WTC11 (cell line): ENCODE measurements at regions of chr11 and their contacts with region 1.

Region 1: GRCh38 chr11:79493555-79494171 is 52.8 kb upstream of the TENM4 start:
- DNase-seq: peak; percentile 96
- ATAC-seq: peak; percentile 97
- H3K4me3 Mint-ChIP-seq: no peak overlapping the region
- H3K27ac Mint-ChIP-seq: no peak overlapping the region
- H3K4me1 Mint-ChIP-seq: peaks cover 12% of the 10 kb centered on the region
- H3K27me3 Mint-ChIP-seq: peaks cover 6% of the 10 kb centered on the region; the same call in 1 of the 2 replicates
- CTCF ChIP-seq: peak; percentile 96

Region 2: DNA sequence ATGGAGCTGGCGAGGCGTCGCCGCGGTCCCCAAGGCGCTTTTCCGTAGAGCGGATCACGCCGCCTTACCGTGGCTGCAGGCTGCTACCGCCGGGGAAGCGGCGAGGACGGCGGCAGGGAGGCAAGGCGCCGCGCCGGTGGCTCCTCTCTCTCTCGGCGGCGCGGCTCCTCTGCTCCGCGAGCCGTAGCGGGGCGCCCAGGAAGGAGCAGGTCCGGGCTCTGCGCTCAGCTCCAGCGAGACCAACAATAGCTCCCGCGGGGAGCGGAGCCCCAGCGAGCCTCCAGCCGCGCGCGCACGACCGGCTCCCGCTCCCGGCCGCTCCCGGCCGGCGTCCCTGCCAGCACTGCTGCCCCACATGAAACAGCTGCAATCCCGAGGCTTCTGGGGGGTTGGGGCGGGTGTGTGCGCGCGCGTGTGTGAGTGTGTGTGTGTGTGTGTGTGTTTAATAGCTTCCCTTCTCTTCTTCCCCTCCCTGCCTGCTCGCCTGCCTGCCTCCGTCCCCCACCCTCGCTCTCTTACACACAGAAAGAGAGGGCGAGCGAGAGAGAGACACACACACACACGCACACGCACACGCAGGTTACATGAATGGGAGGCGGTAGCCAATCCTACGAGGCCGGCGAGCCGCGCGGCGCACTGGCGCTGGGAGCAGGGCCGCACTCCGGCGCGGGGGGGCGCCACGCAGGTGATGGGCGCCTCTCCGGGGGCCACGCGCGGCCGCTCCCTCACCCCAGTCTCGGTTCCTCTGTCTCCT is 53.0 kb before region 1 on chr11 and contains the start of gene TENM4:
- CTCF ChIA-PET with region 1: interaction called, 22 read pairs
- POLR2A ChIA-PET with region 1: no interaction called
- DNase-seq: peak; percentile 61
- ATAC-seq: peak; percentile 8
- H3K4me3 Mint-ChIP-seq: peak within 1 kb of the TSS; percentile 86
- H3K27ac Mint-ChIP-seq: no peak within 1 kb of the TSS
- H3K4me1 Mint-ChIP-seq: peaks cover 36% of the 10 kb centered on the region
- H3K27me3 Mint-ChIP-seq: peaks cover 68% of the 10 kb centered on the region
- CTCF ChIP-seq: peak; percentile 10; the same call in 1 of the 2 replicates
- total RNA-seq, gene TENM4: 17.2 to 25.0 TPM (median 18.1 TPM) in 3 replicates

Region 3: DNA sequence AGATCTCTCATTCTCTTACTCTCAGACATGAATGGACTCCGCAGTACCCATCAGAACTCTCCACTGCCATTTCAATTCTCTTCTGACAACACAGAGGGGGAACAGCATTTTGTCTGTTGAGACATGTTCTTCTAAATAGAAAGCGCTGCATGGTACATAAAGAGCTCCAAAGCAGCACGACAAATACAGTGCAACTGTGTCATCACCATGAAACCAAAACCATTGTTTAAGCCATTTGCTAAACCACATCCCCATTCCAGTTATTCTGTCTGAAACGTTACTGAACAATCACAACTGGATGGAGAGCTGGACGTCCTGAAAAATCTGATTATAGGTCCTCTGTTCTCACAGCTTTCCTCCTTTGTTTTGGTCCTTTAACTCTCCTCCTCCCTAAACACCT is 35.0 kb before region 1 on chr11:
- CTCF ChIA-PET with region 1: interaction called, 21 read pairs
- POLR2A ChIA-PET with region 1: no interaction called
- DNase-seq: no peak
- ATAC-seq: no peak
- H3K4me3 Mint-ChIP-seq: no peak overlapping the region
- H3K27ac Mint-ChIP-seq: no peak overlapping the region
- H3K4me1 Mint-ChIP-seq: peaks cover 25% of the 10 kb centered on the region
- H3K27me3 Mint-ChIP-seq: no peaks in the 10 kb centered on the region
- CTCF ChIP-seq: no peak

Region 4: GRCh38 chr11:79472736-79473529 is 20.7 kb before region 1 on chr11:
- CTCF ChIA-PET with region 1: interaction called, 18 read pairs
- POLR2A ChIA-PET with region 1: no interaction called
- DNase-seq: peak; percentile 70
- ATAC-seq: peak; percentile 87
- H3K4me3 Mint-ChIP-seq: peak overlapping the region; percentile 47
- H3K27ac Mint-ChIP-seq: peak overlapping the region; percentile 94
- H3K4me1 Mint-ChIP-seq: peaks cover 62% of the 10 kb centered on the region
- H3K27me3 Mint-ChIP-seq: peaks cover 6% of the 10 kb centered on the region
- CTCF ChIP-seq: no peak